ENCODE measurements at regions of chr9 and their contacts with region 1.

Region 1: DNA sequence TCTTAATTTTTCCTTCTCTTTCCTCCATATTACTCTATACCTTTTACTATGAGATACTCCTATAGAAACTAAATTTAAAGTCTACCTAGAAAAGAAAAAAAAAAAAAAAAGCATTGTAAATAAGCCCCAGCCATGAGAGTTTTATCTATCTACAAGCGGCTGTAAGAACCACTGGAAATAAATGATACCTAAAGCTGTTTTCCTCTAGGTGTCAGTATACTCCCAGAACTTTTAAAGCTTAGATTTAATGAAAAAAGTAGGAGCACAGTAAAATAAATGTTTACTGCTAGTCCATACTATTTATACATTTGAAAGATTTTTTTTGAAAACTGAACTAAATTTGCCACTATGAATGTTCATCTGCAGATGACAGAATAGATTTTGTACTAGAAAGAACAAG is 26.2 kb downstream of the TYRP1 start:
- DNase-seq: peak; percentile 22
- H3K4me3 ChIP-seq: no peak overlapping the region; a peak in 1 of 4 replicates
- H3K27ac ChIP-seq: no peak overlapping the region; a peak in 1 of 4 replicates
- H3K4me1 ChIP-seq: peaks cover 0 to 7% of the 10 kb centered on the region in 2 experiments; a peak in 2 of 4 replicates
- H3K27me3 ChIP-seq: no peaks in the 10 kb centered on the region
- CTCF ChIP-seq: peak; percentile 74
- EP300 ChIP-seq: no peak
- RAD21 ChIP-seq: peak; percentile 70

Region 2: DNA sequence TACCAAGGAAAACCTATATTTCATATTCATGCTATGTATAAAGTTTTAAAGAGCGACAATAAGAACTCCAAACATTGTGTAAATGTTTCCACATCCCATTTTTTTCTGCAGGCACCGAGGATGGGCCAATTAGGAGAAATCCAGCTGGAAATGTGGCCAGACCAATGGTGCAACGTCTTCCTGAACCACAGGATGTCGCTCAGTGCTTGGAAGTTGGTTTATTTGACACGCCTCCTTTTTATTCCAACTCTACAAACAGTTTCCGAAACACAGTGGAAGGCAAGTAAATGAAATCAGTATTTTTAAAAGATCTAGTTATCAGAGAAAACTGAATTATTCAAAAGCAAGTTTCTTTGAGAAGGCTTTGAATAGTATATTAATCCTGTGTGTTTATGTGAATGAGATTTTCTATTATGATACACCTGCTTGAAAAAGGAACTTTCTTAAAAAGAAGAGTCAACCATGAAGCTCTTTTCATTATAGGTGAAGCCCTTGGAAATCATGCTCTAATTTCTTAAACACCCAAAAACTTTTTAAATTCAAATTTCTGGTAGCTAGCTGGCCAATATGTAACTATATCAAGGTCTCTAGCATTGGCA is 17.2 kb before region 1 on chr9:
- CTCF ChIA-PET with region 1: interaction called, 18 read pairs
- POLR2A ChIA-PET with region 1: no interaction called
- DNase-seq: peak; percentile 30
- H3K4me3 ChIP-seq: peak overlapping the region in 1 of 2 experiments; percentile 41; a peak in 1 of 4 replicates
- H3K27ac ChIP-seq: no peak overlapping the region
- H3K4me1 ChIP-seq: peaks cover 0 to 14% of the 10 kb centered on the region in 2 experiments; a peak in 2 of 4 replicates
- H3K27me3 ChIP-seq: no peaks in the 10 kb centered on the region
- CTCF ChIP-seq: peak; percentile 76
- EP300 ChIP-seq: no peak
- RAD21 ChIP-seq: peak; percentile 96

Region 3: GRCh38 chr9:12730927-12731326 is 11.5 kb after region 1 on chr9:
- CTCF ChIA-PET with region 1: interaction called, 14 read pairs
- POLR2A ChIA-PET with region 1: no interaction called
- DNase-seq: no peak
- H3K4me3 ChIP-seq: no peak overlapping the region
- H3K27ac ChIP-seq: no peak overlapping the region
- H3K4me1 ChIP-seq: no peaks in the 10 kb centered on the region
- H3K27me3 ChIP-seq: no peaks in the 10 kb centered on the region
- CTCF ChIP-seq: no peak
- EP300 ChIP-seq: no peak
- RAD21 ChIP-seq: no peak

Region 4: GRCh38 chr9:12819436-12820185 is 100.2 kb after region 1 on chr9:
- CTCF ChIA-PET with region 1: interaction called, 12 read pairs
- POLR2A ChIA-PET with region 1: no interaction called
- DNase-seq: no peak
- H3K4me3 ChIP-seq: no peak overlapping the region; a peak in 1 of 4 replicates
- H3K27ac ChIP-seq: peak overlapping the region in 1 of 2 experiments; percentile 51; a peak in 2 of 4 replicates
- H3K4me1 ChIP-seq: peaks cover 4 to 17% of the 10 kb centered on the region in 2 experiments; a peak in 2 of 4 replicates
- H3K27me3 ChIP-seq: no peaks in the 10 kb centered on the region
- CTCF ChIP-seq: peak; percentile 65
- EP300 ChIP-seq: no peak
- RAD21 ChIP-seq: peak; percentile 56

Region 5: GRCh38 chr9:12884737-12885414 is 165.4 kb after region 1 on chr9:
- CTCF ChIA-PET with region 1: interaction called, 31 read pairs
- POLR2A ChIA-PET with region 1: no interaction called
- DNase-seq: peak; percentile 29
- H3K4me3 ChIP-seq: no peak overlapping the region; a peak in 1 of 4 replicates
- H3K27ac ChIP-seq: no peak overlapping the region
- H3K4me1 ChIP-seq: no peaks in the 10 kb centered on the region; a peak in 2 of 4 replicates
- H3K27me3 ChIP-seq: no peaks in the 10 kb centered on the region
- CTCF ChIP-seq: peak; percentile 71
- EP300 ChIP-seq: no peak
- RAD21 ChIP-seq: peak; percentile 92